Dendritic cell treated with granulocyte-macrophage colony-stimulating factor and Interleukin-4, amounts not matched to agents 40 ng/mL and 50 ng/mL, for 4 days (primary cell): ENCODE measurements at regions of chr4 and their contacts with region 1.

Region 1: DNA sequence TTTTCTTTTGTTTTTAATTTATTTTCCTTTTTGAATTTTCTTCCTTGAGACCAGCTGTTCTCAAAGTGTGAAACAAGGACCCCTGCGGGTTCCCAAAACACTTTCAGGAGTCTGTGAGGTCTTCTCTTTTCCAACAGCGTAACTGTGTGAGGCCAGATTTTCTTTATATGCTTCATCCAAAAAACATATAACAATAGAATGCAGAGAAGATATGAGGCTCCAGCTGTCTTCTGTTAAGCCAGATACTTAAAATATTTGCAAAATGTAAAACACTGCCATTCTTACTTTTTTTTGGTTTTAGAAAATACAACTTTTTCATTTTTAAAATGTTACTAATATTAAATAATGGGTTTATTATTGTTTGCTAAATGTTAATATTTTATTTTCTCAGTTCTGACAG is 27.8 kb downstream of the USP38 start:
- H3K4me3 Mint-ChIP-seq: no peak overlapping the region
- H3K27ac Mint-ChIP-seq: no peak overlapping the region
- H3K4me1 Mint-ChIP-seq: no peaks in the 10 kb centered on the region
- H3K27me3 Mint-ChIP-seq: no peaks in the 10 kb centered on the region

Region 2: GRCh38 chr4:143035661-143036060 is 176.9 kb before region 1 on chr4:
- intact Hi-C with region 1: no loop called
- H3K4me3 Mint-ChIP-seq: no peak overlapping the region
- H3K27ac Mint-ChIP-seq: no peak overlapping the region
- H3K4me1 Mint-ChIP-seq: no peaks in the 10 kb centered on the region
- H3K27me3 Mint-ChIP-seq: no peaks in the 10 kb centered on the region

Region 3: DNA sequence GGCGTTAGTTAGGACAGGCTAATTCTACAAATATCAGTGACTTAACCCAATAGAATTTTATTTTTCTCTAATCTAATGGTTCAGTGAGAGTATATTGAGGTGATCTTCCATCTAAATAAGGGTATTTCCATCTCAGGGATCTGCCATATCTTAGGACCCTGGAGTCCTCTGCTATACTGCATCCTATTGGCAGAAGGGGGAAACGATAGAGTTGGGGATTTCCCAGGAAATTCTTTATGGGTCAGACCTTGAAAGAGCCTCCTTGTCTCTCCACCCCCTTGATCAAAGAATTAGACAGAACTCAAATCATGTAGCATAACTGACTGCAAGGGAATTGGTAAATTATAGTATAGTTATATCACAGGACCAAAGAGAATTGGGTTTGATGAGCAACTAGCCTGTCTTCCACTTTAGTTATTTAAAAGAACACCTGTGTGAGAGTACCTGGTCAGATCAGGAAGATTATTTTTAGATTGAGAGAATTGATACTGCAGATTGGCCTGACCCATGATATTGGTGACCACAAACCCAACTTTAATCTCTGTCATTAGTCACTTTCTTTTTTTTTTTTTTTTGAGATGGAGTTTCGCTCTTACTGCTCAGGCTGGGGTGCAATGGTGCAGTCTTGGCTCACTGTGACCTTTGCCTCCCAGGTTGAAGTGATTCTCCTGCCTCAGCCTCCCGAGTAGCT is 326.6 kb after region 1 on chr4:
- intact Hi-C with region 1: loop called (anchors 5 kb)
- H3K4me3 Mint-ChIP-seq: no peak overlapping the region
- H3K27ac Mint-ChIP-seq: no peak overlapping the region
- H3K4me1 Mint-ChIP-seq: no peaks in the 10 kb centered on the region
- H3K27me3 Mint-ChIP-seq: no peaks in the 10 kb centered on the region